Heart right ventricle (tissue), 16 donors: ENCODE measurements at regions of chr13 and their contacts with region 1.

Region 1: GRCh38 chr13:46492946-46493345 is 60.0 kb upstream of the LRCH1 start:
- DNase-seq: peak in 1 of 2 donors; percentile 29
- ATAC-seq: peak in 1 of 8 donors; percentile 42
- H3K4me3 ChIP-seq: no peak overlapping the region
- H3K27ac ChIP-seq: no peak overlapping the region
- H3K4me1 ChIP-seq: peaks cover 0 to 14% (median 0%) of the 10 kb centered on the region in 9 donors
- H3K27me3 ChIP-seq: peaks cover 0 to 3% (median 0%) of the 10 kb centered on the region in 7 donors
- CTCF ChIP-seq: peak; percentile 36 to 82 (median 67)

Region 2: GRCh38 chr13:46544208-46544607 is 51.3 kb after region 1 on chr13:
- intact Hi-C with region 1: loop called in 3 of 10 experiments (anchors 5 to 10 kb)
- DNase-seq: no peak
- ATAC-seq: no peak
- H3K4me3 ChIP-seq: no peak overlapping the region
- H3K27ac ChIP-seq: no peak overlapping the region
- H3K4me1 ChIP-seq: no peaks in the 10 kb centered on the region
- H3K27me3 ChIP-seq: no peaks in the 10 kb centered on the region
- CTCF ChIP-seq: no peak

Region 3: DNA sequence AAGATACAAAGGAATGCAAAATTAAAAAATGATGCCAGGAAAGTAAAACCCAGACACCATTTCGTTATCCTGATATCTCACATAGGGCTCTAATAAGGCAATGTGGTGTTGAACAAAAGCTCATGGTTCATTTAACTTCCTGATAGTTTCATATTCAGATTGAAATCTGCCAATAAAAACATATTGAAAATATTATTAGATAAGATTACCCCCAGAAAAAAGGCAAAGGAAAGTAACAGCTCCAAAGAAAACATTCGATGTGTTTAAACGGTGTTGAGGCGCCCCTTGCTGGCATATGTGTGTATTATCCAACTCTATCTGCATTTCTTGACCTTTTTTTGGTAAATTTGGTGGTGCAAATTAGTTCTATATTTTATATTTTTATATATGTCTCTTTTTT is 228.1 kb after region 1 on chr13:
- intact Hi-C with region 1: loop called (anchors 1 to 5 kb)
- DNase-seq: peak in 1 of 2 donors; percentile 53
- ATAC-seq: peak in 4 of 8 donors; percentile 63 to 76 (median 64)
- H3K4me3 ChIP-seq: no peak overlapping the region
- H3K27ac ChIP-seq: no peak overlapping the region
- H3K4me1 ChIP-seq: peaks cover 0 to 10% (median 0%) of the 10 kb centered on the region in 9 donors
- H3K27me3 ChIP-seq: no peaks in the 10 kb centered on the region
- CTCF ChIP-seq: peak; percentile 46 to 87 (median 69)